Gastrocnemius medialis (tissue), 4 donors: ENCODE measurements at regions of chr6 and their contacts with region 1.

Region 1: DNA sequence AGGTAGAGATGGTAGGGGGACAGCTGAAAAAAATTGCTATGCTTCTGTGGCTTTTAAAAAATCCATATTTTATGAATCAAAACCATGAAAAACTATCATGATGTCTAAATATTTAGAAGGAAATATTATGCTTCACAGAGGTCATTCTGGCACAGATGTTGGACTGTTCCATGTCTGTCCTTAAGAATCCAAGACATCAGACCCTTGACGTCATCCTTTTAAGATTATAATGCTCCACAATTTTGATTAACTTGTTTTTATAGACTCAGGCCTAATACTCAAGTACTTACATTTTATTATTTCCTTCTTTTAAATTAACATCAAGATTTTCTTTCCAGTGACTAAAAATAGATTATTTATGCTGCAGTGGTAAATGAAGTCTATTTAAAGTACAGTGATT is 29.7 kb downstream of the FILIP1 start:
- DNase-seq: no peak
- ATAC-seq: no peak
- H3K4me3 ChIP-seq: no peak overlapping the region
- H3K27ac ChIP-seq: peak overlapping the region; percentile 44 to 65 (median 48)
- H3K4me1 ChIP-seq: peaks cover 81 to 82% of the 10 kb centered on the region in 2 donors
- H3K27me3 ChIP-seq: no peaks in the 10 kb centered on the region
- CTCF ChIP-seq: no peak
- POLR2A ChIP-seq: no peak

Region 2: GRCh38 chr6:75449716-75450115 is 14.2 kb before region 1 on chr6:
- in situ Hi-C with region 1: no loop called
- intact Hi-C with region 1: no loop called
- DNase-seq: no peak
- ATAC-seq: no peak
- H3K4me3 ChIP-seq: no peak overlapping the region
- H3K27ac ChIP-seq: peak overlapping the region in 2 of 4 donors; percentile 27 to 36
- H3K4me1 ChIP-seq: peaks cover 14 to 32% of the 10 kb centered on the region in 2 donors
- H3K27me3 ChIP-seq: no peaks in the 10 kb centered on the region
- CTCF ChIP-seq: no peak
- POLR2A ChIP-seq: no peak

Region 3: DNA sequence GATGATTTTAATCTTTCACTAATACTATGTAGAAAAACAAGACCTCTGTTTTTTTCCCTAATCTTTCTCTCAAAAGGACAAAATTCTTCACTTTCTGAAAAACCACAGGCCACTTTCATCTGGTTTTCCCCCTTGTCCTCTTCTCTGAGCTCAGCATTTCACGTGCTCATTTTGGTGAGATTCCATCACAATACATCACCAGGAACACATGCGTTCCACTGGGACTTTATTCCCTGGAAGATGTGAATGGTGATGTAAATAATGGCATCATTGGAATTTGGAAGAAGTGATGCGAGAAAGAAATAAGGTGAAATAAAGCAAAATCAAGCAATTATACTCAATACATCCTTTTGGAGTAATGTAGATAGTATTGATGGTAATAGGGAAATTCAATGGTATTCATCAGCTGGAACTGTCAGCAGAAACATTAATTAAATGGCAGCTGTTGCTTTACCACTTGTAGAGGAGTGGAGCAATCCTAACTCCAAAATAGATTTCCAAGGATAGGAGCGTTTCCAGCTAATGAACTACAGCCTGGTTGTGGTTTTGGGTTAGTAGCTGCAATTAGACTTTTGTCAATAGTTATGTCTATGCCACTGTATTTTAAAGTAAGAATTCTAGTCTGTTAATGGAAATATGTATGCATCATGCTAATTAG is 18.2 kb after region 1 on chr6:
- in situ Hi-C with region 1: no loop called
- intact Hi-C with region 1: loop called (anchors 2 kb)
- DNase-seq: peak; percentile 28 to 31
- ATAC-seq: peak; percentile 52 to 60
- H3K4me3 ChIP-seq: no peak overlapping the region
- H3K27ac ChIP-seq: peak overlapping the region; percentile 93 to 98 (median 98)
- H3K4me1 ChIP-seq: peaks cover 87 to 89% of the 10 kb centered on the region in 2 donors
- H3K27me3 ChIP-seq: no peaks in the 10 kb centered on the region
- CTCF ChIP-seq: peak in 1 of 5 experiments; percentile 7
- POLR2A ChIP-seq: no peak

Region 4: GRCh38 chr6:75691012-75691411 is 227.1 kb after region 1 on chr6:
- in situ Hi-C with region 1: no loop called
- intact Hi-C with region 1: no loop called
- DNase-seq: no peak
- ATAC-seq: no peak
- H3K4me3 ChIP-seq: no peak overlapping the region
- H3K27ac ChIP-seq: no peak overlapping the region
- H3K4me1 ChIP-seq: no peaks in the 10 kb centered on the region
- H3K27me3 ChIP-seq: no peaks in the 10 kb centered on the region
- CTCF ChIP-seq: no peak
- POLR2A ChIP-seq: no peak